ENCODE measurements at regions of chr3 and their contacts with region 1.

Region 1: GRCh38 chr3:136752422-136753325 is 496 bp upstream of the STAG1 start:
- DNase-seq: peak; percentile 99
- ATAC-seq: peak; percentile 76 to 94 (median 84)
- H3K4me3 ChIP-seq: peak overlapping the region; percentile 93
- H3K4me3 Mint-ChIP-seq: peak overlapping the region; percentile 95
- H3K27ac ChIP-seq: peak overlapping the region; percentile 99
- H3K27ac Mint-ChIP-seq: peak overlapping the region; percentile 92 to 93
- H3K4me1 ChIP-seq: peaks cover 21% of the 10 kb centered on the region
- H3K4me1 Mint-ChIP-seq: peaks cover 46 to 47% of the 10 kb centered on the region in 2 donors
- H3K27me3 ChIP-seq: no peaks in the 10 kb centered on the region
- H3K27me3 Mint-ChIP-seq: no peaks in the 10 kb centered on the region
- CTCF ChIP-seq: no peak

Region 2: GRCh38 chr3:136075218-136075808 is 677.4 kb before region 1 on chr3:
- intact Hi-C with region 1: loop called (anchors 1 kb)
- DNase-seq: peak; percentile 58 to 89
- ATAC-seq: peak; percentile 85 to 88 (median 86)
- H3K4me3 ChIP-seq: no peak overlapping the region
- H3K4me3 Mint-ChIP-seq: no peak overlapping the region
- H3K27ac ChIP-seq: no peak overlapping the region
- H3K27ac Mint-ChIP-seq: no peak overlapping the region
- H3K4me1 ChIP-seq: no peaks in the 10 kb centered on the region
- H3K4me1 Mint-ChIP-seq: peaks cover 0 to 8% of the 10 kb centered on the region in 2 donors
- H3K27me3 ChIP-seq: no peaks in the 10 kb centered on the region
- H3K27me3 Mint-ChIP-seq: peaks cover 3 to 4% of the 10 kb centered on the region in 2 donors
- CTCF ChIP-seq: peak; percentile 99

Region 3: GRCh38 chr3:136305878-136306277 is 446.8 kb before region 1 on chr3:
- intact Hi-C with region 1: loop called (anchors 1 kb)
- DNase-seq: no peak
- ATAC-seq: peak; percentile 48 to 64 (median 50)
- H3K4me3 ChIP-seq: no peak overlapping the region
- H3K4me3 Mint-ChIP-seq: no peak overlapping the region
- H3K27ac ChIP-seq: no peak overlapping the region
- H3K27ac Mint-ChIP-seq: no peak overlapping the region
- H3K4me1 ChIP-seq: no peaks in the 10 kb centered on the region
- H3K4me1 Mint-ChIP-seq: no peaks in the 10 kb centered on the region
- H3K27me3 ChIP-seq: no peaks in the 10 kb centered on the region
- H3K27me3 Mint-ChIP-seq: no peaks in the 10 kb centered on the region
- CTCF ChIP-seq: peak; percentile 60

Region 4: GRCh38 chr3:136694321-136694720 is 58.4 kb before region 1 on chr3:
- intact Hi-C with region 1: loop called (anchors 2 kb)
- DNase-seq: peak; percentile 26 to 58
- ATAC-seq: peak; percentile 81 to 90 (median 86)
- H3K4me3 ChIP-seq: no peak overlapping the region
- H3K4me3 Mint-ChIP-seq: peak overlapping the region; percentile 92
- H3K27ac ChIP-seq: peak overlapping the region; percentile 86
- H3K27ac Mint-ChIP-seq: peak overlapping the region; percentile 89 to 94
- H3K4me1 ChIP-seq: peaks cover 45% of the 10 kb centered on the region
- H3K4me1 Mint-ChIP-seq: peaks cover 90 to 93% of the 10 kb centered on the region in 2 donors
- H3K27me3 ChIP-seq: no peaks in the 10 kb centered on the region
- H3K27me3 Mint-ChIP-seq: no peaks in the 10 kb centered on the region
- CTCF ChIP-seq: no peak

Region 5: DNA sequence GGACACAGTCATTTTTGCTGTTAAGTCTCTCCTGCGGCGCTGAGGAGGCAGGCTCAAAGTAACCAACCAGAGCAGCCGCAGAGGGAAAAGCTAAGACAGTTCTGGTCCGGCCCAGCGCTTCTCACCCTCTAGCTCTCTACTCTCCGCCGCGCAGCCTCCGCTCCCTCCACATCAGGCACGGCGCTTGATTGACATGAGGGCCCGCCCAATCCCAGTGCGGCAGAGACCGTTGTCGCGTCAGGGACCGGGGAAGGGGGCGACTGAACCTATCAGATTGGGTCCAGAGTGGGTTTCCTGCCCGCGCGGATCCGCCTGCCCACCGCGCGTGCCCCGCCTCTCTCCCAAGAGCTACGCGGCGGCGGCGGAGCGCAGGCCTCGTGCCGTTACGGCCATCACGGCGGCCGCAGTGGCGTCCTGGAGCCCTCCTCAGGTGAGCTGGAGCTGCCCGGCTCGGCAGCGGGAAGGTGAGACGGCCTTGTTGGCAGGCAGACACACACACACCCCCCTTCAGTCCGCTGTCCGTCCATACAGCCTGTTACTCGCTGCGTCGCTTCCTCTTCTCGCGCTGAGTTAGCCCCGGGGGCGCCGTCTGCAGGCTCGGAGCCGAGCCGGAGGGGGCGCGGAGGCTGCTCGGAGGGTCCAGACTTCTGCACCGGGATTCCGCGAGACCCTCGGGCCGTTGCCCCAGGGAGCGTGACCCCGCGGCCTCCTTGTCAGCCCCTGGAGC is 109.4 kb after region 1 on chr3 and contains the start of gene NCK1:
- intact Hi-C with region 1: loop called (anchors 1 kb)
- DNase-seq: peak; percentile 98 to 99
- ATAC-seq: peak; percentile 91 to 98 (median 94)
- H3K4me3 ChIP-seq: peak within 1 kb of the TSS; percentile 57
- H3K4me3 Mint-ChIP-seq: peak within 1 kb of the TSS; percentile 98
- H3K27ac ChIP-seq: peak within 1 kb of the TSS; percentile 97
- H3K27ac Mint-ChIP-seq: peak within 1 kb of the TSS; percentile 98 to 99
- H3K4me1 ChIP-seq: peaks cover 17% of the 10 kb centered on the region
- H3K4me1 Mint-ChIP-seq: peaks cover 45 to 52% of the 10 kb centered on the region in 2 donors
- H3K27me3 ChIP-seq: no peaks in the 10 kb centered on the region
- H3K27me3 Mint-ChIP-seq: no peaks in the 10 kb centered on the region
- CTCF ChIP-seq: peak; percentile 24
- total RNA-seq, gene NCK1: 61.2 to 77.9 (median 69.5) TPM

Region 6: DNA sequence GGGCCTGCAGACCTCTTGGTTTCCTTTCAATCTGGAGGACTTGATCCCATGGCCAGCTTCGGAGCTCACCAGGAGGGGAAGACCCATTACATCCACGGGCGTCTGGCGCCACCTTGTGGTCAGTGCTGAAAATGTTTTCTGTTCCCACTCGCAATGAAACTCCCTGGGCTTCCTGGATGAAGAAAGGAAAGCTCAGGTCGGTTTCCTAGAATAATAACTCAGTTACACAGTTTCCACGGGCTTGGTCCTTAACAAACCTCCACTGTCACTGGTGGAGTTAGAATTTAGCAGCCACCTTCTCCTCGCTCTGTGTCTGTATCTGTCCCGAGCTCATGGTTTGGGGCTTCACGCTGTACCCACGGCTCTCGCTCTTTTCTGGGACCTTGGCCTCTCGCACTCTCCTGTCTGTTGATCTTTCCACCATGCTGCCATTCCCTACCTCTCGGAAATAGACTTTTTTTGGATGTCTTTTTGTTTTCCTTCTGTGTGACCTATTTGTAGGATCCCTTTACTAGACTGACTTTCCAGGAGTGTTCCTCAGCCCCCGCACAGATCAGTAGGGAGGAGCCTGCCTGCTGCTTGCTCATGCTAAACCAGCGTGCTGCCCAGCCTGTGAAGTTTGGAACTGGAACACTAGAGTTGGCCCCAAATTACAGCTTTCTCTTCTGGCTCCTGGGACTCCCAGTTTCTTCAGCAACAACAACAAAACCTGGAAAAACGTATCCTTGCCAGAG is 261.4 kb after region 1 on chr3:
- intact Hi-C with region 1: loop called (anchors 1 kb)
- DNase-seq: peak; percentile 81 to 91
- ATAC-seq: peak; percentile 86 to 97 (median 96)
- H3K4me3 ChIP-seq: peak overlapping the region; percentile 7
- H3K4me3 Mint-ChIP-seq: peak overlapping the region; percentile 67
- H3K27ac ChIP-seq: no peak overlapping the region
- H3K27ac Mint-ChIP-seq: peak overlapping the region in 1 of 2 donors; percentile 85
- H3K4me1 ChIP-seq: peaks cover 10% of the 10 kb centered on the region
- H3K4me1 Mint-ChIP-seq: peaks cover 10% of the 10 kb centered on the region in 2 donors
- H3K27me3 ChIP-seq: no peaks in the 10 kb centered on the region
- H3K27me3 Mint-ChIP-seq: no peaks in the 10 kb centered on the region
- CTCF ChIP-seq: peak; percentile 93

Region 7: DNA sequence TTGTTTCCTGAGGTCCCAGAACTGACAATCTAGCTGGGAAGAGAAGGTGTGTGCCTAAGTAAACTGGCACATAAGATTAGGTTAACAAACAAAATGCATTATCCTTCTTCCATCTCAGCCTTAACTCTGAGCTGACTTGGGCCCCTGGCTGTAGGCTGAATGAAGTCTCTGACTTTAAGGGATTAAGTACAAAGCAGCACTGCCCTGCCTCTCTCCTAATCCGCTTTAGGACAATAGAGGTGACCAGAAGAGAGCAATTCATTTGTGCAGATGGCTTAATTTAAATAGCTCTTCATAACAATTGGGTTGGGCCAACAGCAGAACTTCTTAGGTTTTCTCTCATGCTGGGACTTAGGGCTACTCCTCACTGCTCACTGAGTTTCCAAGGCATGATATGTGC is 829.8 kb after region 1 on chr3:
- intact Hi-C with region 1: no loop called
- DNase-seq: no peak
- ATAC-seq: no peak
- H3K4me3 ChIP-seq: no peak overlapping the region
- H3K4me3 Mint-ChIP-seq: no peak overlapping the region
- H3K27ac ChIP-seq: no peak overlapping the region
- H3K27ac Mint-ChIP-seq: no peak overlapping the region
- H3K4me1 ChIP-seq: no peaks in the 10 kb centered on the region
- H3K4me1 Mint-ChIP-seq: no peaks in the 10 kb centered on the region
- H3K27me3 ChIP-seq: no peaks in the 10 kb centered on the region
- H3K27me3 Mint-ChIP-seq: no peaks in the 10 kb centered on the region
- CTCF ChIP-seq: no peak

Measured in natural killer cell (primary cell).